CD4-positive, alpha-beta memory T cell (primary cell): ENCODE measurements at regions of chr1 and their contacts with region 1.

Region 1: GRCh38 chr1:226121587-226122400 is 59.3 kb downstream of the H3-3A start:
- DNase-seq: peak; percentile 75 to 85 (median 80)
- H3K4me3 ChIP-seq: peak overlapping the region in 1 of 2 donors; percentile 58
- H3K4me3 Mint-ChIP-seq: peak overlapping the region in 7 of 8 donors; percentile 48 to 89 (median 69)
- H3K27ac ChIP-seq: peak overlapping the region; percentile 68
- H3K27ac Mint-ChIP-seq: peak overlapping the region in 5 of 7 donors; percentile 48 to 93 (median 74)
- H3K4me1 ChIP-seq: peaks cover 29% of the 10 kb centered on the region
- H3K4me1 Mint-ChIP-seq: peaks cover 18 to 35% (median 27%) of the 10 kb centered on the region in 4 donors
- H3K27me3 ChIP-seq: no peaks in the 10 kb centered on the region
- H3K27me3 Mint-ChIP-seq: no peaks in the 10 kb centered on the region

Region 2: GRCh38 chr1:225999227-225999911 is 122.4 kb before region 1 on chr1 and contains the start of gene SDE2:
- CTCF ChIA-PET with region 1: interaction called, 4 read pairs
- POLR2A ChIA-PET with region 1: interaction called, 19 read pairs
- intact Hi-C with region 1: loop called (anchors 2 kb)
- DNase-seq: peak; percentile 99 to 100 (median 100)
- H3K4me3 ChIP-seq: peak within 1 kb of the TSS; percentile 78 to 99
- H3K4me3 Mint-ChIP-seq: peak within 1 kb of the TSS; percentile 99 to 100 (median 100)
- H3K27ac ChIP-seq: peak within 1 kb of the TSS; percentile 98
- H3K27ac Mint-ChIP-seq: peak within 1 kb of the TSS; percentile 100
- H3K4me1 ChIP-seq: peaks cover 81% of the 10 kb centered on the region
- H3K4me1 Mint-ChIP-seq: peaks cover 44 to 78% (median 61%) of the 10 kb centered on the region in 4 donors
- H3K27me3 ChIP-seq: no peaks in the 10 kb centered on the region
- H3K27me3 Mint-ChIP-seq: no peaks in the 10 kb centered on the region
- total RNA-seq, gene SDE2: 21.1 to 21.2 TPM

Region 3: DNA sequence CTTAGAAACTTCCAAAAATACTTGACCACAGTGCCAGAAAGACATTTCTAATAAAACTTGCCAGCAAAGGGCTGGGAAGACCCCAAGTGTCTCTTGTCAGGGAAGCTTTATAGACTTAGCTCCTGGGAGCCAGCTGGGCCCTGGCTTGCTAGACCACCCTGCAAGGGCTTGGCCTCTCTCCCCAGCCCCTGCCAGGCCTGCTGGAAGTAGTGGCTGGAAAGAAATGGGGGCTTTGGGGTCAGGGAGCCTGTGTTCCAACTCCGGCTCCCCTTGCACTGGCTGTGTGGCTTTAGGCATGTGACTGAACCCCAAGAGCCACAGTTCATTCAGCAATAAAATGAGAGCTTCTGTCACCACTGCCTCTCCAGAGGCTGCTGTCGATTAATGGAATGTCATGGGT is 28.2 kb before region 1 on chr1:
- CTCF ChIA-PET with region 1: interaction called, 11 read pairs
- POLR2A ChIA-PET with region 1: interaction called, 3 read pairs
- intact Hi-C with region 1: no loop called
- DNase-seq: no peak
- H3K4me3 ChIP-seq: no peak overlapping the region
- H3K4me3 Mint-ChIP-seq: no peak overlapping the region
- H3K27ac ChIP-seq: no peak overlapping the region
- H3K27ac Mint-ChIP-seq: no peak overlapping the region
- H3K4me1 ChIP-seq: no peaks in the 10 kb centered on the region
- H3K4me1 Mint-ChIP-seq: no peaks in the 10 kb centered on the region
- H3K27me3 ChIP-seq: no peaks in the 10 kb centered on the region
- H3K27me3 Mint-ChIP-seq: peaks cover 6 to 8% of the 10 kb centered on the region in 2 donors

Region 4: GRCh38 chr1:226149806-226150205 is 28.0 kb after region 1 on chr1:
- CTCF ChIA-PET with region 1: interaction called, 25 read pairs
- POLR2A ChIA-PET with region 1: interaction called, 3 read pairs
- intact Hi-C with region 1: no loop called
- DNase-seq: no peak
- H3K4me3 ChIP-seq: no peak overlapping the region
- H3K4me3 Mint-ChIP-seq: no peak overlapping the region
- H3K27ac ChIP-seq: no peak overlapping the region
- H3K27ac Mint-ChIP-seq: no peak overlapping the region
- H3K4me1 ChIP-seq: no peaks in the 10 kb centered on the region
- H3K4me1 Mint-ChIP-seq: peaks cover 0 to 2% (median 0%) of the 10 kb centered on the region in 4 donors
- H3K27me3 ChIP-seq: no peaks in the 10 kb centered on the region
- H3K27me3 Mint-ChIP-seq: no peaks in the 10 kb centered on the region

Region 5: DNA sequence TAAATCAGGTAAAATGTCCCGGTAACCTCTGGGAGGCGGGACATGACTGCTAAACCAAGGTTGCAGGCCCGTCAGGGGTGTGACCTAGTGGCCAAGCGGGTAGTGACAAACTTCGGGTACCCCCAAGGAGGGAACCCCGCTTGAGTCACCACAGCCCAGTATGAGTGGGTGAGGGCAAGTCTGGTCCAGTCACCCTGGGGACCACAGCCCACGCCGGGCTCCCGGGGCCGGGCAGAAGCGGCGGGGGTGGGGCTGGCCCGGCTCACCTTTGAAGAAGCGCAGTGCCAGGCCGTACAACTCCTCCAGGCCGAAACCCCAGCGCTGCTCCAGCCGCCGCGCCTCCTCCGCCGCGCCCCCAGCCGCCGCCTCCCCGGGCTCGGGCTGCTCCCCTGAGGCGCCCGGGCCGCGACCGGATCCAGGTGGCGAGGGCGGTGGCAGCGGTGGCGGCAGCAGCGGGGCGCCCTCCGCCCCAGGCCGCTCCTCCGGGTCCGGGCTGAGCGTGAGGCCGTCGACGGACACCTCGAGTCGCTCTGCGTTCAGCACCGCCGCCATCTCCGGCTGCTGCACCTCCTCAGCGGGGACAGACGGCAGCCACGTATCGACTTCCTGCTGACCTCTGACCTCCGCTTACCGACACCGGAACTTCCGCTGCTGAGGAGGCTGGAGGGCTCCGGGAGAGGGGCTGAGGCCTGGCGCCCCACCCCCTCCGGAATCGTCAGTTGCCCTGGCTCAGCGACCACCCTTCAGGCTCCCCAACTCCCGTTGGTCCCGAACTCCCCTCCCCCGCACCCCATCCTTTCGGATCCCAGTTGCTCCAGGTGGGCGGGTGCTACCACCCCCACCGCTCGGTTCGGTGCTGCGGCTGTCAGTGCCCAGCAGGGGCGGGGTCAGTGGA is 64.6 kb after region 1 on chr1 and contains the start of gene ACBD3:
- CTCF ChIA-PET with region 1: interaction called, 25 read pairs
- POLR2A ChIA-PET with region 1: interaction called, 3 read pairs
- intact Hi-C with region 1: no loop called
- DNase-seq: peak; percentile 82 to 91 (median 84)
- H3K4me3 ChIP-seq: peak within 1 kb of the TSS; percentile 98 to 99
- H3K4me3 Mint-ChIP-seq: peak within 1 kb of the TSS; percentile 92 to 98 (median 95)
- H3K27ac ChIP-seq: peak within 1 kb of the TSS; percentile 70
- H3K27ac Mint-ChIP-seq: peak within 1 kb of the TSS; percentile 90 to 97 (median 95)
- H3K4me1 ChIP-seq: peaks cover 43% of the 10 kb centered on the region
- H3K4me1 Mint-ChIP-seq: peaks cover 23 to 40% (median 31%) of the 10 kb centered on the region in 4 donors
- H3K27me3 ChIP-seq: no peaks in the 10 kb centered on the region
- H3K27me3 Mint-ChIP-seq: no peaks in the 10 kb centered on the region
- total RNA-seq, gene ACBD3: 28.7 to 29.7 TPM

Region 6: DNA sequence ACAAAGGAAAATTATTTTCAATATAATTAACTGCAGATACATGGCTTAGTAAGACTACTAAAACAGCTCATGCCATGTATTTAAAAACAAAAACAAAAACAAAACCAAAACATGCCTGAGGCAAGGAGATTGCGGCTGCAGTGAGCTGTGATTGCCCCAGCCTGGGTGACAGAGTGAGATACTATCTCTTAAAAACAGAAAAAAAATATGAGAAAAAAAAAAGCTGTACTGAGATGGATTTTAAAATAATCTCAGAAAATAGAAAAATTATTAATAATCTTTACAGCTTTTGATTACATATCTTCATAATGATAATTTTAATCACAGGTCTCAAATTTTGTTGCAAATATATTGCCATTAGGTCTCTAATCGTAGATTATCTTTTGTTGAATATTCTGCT is 211.2 kb after region 1 on chr1:
- CTCF ChIA-PET with region 1: interaction called, 91 read pairs
- POLR2A ChIA-PET with region 1: interaction called, 5 read pairs
- intact Hi-C with region 1: loop called (anchors 1 kb)
- DNase-seq: peak in 2 of 5 donors; percentile 10 to 14
- H3K4me3 ChIP-seq: no peak overlapping the region
- H3K4me3 Mint-ChIP-seq: peak overlapping the region; percentile 45 to 81 (median 66)
- H3K27ac ChIP-seq: no peak overlapping the region
- H3K27ac Mint-ChIP-seq: peak overlapping the region in 6 of 7 donors; percentile 28 to 84 (median 61)
- H3K4me1 ChIP-seq: peaks cover 3% of the 10 kb centered on the region
- H3K4me1 Mint-ChIP-seq: peaks cover 6 to 9% (median 8%) of the 10 kb centered on the region in 4 donors
- H3K27me3 ChIP-seq: no peaks in the 10 kb centered on the region
- H3K27me3 Mint-ChIP-seq: peaks cover 0 to 2% of the 10 kb centered on the region in 2 donors

Region 7: GRCh38 chr1:226608699-226609505 is 487.1 kb after region 1 on chr1:
- CTCF ChIA-PET with region 1: interaction called, 5 read pairs
- POLR2A ChIA-PET with region 1: no interaction called
- intact Hi-C with region 1: loop called (anchors 5 kb)
- DNase-seq: peak; percentile 56 to 65 (median 62)
- H3K4me3 ChIP-seq: no peak overlapping the region
- H3K4me3 Mint-ChIP-seq: no peak overlapping the region
- H3K27ac ChIP-seq: no peak overlapping the region
- H3K27ac Mint-ChIP-seq: peak overlapping the region in 2 of 7 donors; percentile 8 to 55
- H3K4me1 ChIP-seq: no peaks in the 10 kb centered on the region
- H3K4me1 Mint-ChIP-seq: no peaks in the 10 kb centered on the region
- H3K27me3 ChIP-seq: no peaks in the 10 kb centered on the region
- H3K27me3 Mint-ChIP-seq: peaks cover 0 to 9% of the 10 kb centered on the region in 2 donors